MCF 10A (cell line): ENCODE measurements at regions of chr2 and their contacts with region 1.

Region 1: GRCh38 chr2:174846941-174847938 is 83.0 kb upstream of the CHRNA1 start:
- DNase-seq: peak; percentile 91
- H3K4me3 Mint-ChIP-seq: peak overlapping the region; percentile 76
- H3K27ac Mint-ChIP-seq: peak overlapping the region; percentile 78
- H3K4me1 Mint-ChIP-seq: peaks cover 33% of the 10 kb centered on the region
- H3K27me3 Mint-ChIP-seq: no peaks in the 10 kb centered on the region
- CTCF ChIP-seq: no peak

Region 2: DNA sequence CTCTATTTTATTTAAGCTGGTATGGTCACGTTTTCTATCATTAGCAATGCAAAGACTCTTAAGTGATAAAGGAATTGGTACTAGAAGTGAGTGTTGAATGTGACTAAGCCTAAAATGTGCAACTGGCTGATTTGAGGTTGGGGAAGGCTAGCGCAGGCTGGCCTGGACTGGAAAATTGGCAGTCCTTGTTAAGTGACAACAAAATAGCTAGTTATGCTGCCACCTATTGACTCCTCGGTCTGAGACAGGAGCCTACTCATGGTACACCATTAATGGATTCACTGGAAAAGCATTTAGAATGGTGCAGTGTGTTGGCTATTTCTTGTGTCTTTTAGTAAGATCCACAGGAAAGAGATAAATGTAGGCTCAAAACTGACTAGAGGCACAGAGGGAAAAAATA is 244.0 kb before region 1 on chr2:
- CTCF ChIA-PET with region 1: no interaction called
- POLR2A ChIA-PET with region 1: no interaction called
- intact Hi-C with region 1: no loop called
- DNase-seq: peak; percentile 58
- H3K4me3 Mint-ChIP-seq: no peak overlapping the region
- H3K27ac Mint-ChIP-seq: no peak overlapping the region
- H3K4me1 Mint-ChIP-seq: peaks cover 25% of the 10 kb centered on the region
- H3K27me3 Mint-ChIP-seq: no peaks in the 10 kb centered on the region
- CTCF ChIP-seq: peak; percentile 18

Region 3: GRCh38 chr2:174827371-174828369 is 19.6 kb before region 1 on chr2:
- CTCF ChIA-PET with region 1: interaction called, 6 read pairs
- POLR2A ChIA-PET with region 1: interaction called, 16 read pairs
- intact Hi-C with region 1: no loop called
- DNase-seq: no peak
- H3K4me3 Mint-ChIP-seq: peak overlapping the region; percentile 5
- H3K27ac Mint-ChIP-seq: peak overlapping the region; percentile 57
- H3K4me1 Mint-ChIP-seq: peaks cover 28% of the 10 kb centered on the region
- H3K27me3 Mint-ChIP-seq: no peaks in the 10 kb centered on the region
- CTCF ChIP-seq: no peak

Region 4: DNA sequence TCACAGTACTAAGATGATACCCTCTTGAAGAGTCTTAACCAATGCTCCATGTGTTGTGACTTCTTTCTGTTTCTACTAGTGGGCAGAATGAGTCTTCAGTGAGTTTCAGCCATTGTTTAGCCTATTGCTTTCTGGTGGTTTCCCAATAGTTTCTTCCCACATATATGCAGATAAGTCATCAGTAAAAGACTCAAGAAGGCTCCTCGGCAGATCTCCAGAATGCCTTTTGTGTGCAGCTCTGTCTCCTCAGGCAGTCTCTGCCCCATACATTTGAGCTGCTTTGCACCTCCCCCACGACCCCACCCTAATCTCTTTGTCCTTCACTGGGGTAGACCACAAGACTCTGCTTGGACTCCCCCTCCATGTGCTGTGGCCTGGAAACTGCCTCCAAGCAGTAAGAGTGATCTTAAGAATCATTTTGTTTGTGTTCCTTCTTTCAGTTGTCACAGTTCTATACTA is 11.4 kb before region 1 on chr2:
- CTCF ChIA-PET with region 1: interaction called, 6 read pairs
- POLR2A ChIA-PET with region 1: interaction called, 149 read pairs
- intact Hi-C with region 1: loop called (anchors 1 kb)
- DNase-seq: peak; percentile 96
- H3K4me3 Mint-ChIP-seq: peak overlapping the region; percentile 56
- H3K27ac Mint-ChIP-seq: peak overlapping the region; percentile 99
- H3K4me1 Mint-ChIP-seq: peaks cover 66% of the 10 kb centered on the region
- H3K27me3 Mint-ChIP-seq: no peaks in the 10 kb centered on the region
- CTCF ChIP-seq: no peak

Region 5: DNA sequence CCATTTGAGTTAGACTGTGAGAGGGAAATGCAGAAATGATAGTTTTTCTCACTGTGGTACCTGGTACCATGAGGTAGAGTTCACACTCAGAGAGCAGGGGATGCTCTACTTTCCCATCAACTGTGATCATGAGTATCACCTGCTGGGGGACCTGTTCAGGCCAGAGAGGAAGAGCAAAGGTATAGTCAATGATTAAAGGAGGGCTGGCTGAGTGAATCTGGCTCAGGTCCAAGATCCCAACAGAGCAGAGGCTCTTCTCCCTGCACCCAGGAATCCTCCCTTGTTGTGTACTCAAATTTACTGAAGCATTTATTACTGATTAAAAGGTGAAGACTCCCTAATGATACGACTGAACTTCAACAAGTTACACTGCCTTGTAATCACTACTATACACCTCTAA is 21.6 kb after region 1 on chr2:
- CTCF ChIA-PET with region 1: interaction called, 3 read pairs
- POLR2A ChIA-PET with region 1: interaction called, 13 read pairs
- intact Hi-C with region 1: no loop called
- DNase-seq: no peak
- H3K4me3 Mint-ChIP-seq: no peak overlapping the region
- H3K27ac Mint-ChIP-seq: no peak overlapping the region
- H3K4me1 Mint-ChIP-seq: no peaks in the 10 kb centered on the region
- H3K27me3 Mint-ChIP-seq: no peaks in the 10 kb centered on the region
- CTCF ChIP-seq: no peak